ENCODE measurements at regions of chr1 and their contacts with region 1.

Region 1: GRCh38 chr1:247390116-247390791 is 25.7 kb upstream of the NLRP3 start:
- DNase-seq: peak; percentile 42 to 78
- ATAC-seq: peak; percentile 81 to 94 (median 92)
- H3K4me3 ChIP-seq: peak overlapping the region in 6 of 10 donors; percentile 3 to 36 (median 28)
- H3K27ac ChIP-seq: peak overlapping the region in 1 of 10 donors; percentile 71
- H3K4me1 ChIP-seq: peaks cover 0 to 24% (median 0%) of the 10 kb centered on the region in 9 donors
- H3K27me3 ChIP-seq: peaks cover 0 to 13% (median 0%) of the 10 kb centered on the region in 7 donors
- CTCF ChIP-seq: peak; percentile 74 to 93 (median 86)

Region 2: DNA sequence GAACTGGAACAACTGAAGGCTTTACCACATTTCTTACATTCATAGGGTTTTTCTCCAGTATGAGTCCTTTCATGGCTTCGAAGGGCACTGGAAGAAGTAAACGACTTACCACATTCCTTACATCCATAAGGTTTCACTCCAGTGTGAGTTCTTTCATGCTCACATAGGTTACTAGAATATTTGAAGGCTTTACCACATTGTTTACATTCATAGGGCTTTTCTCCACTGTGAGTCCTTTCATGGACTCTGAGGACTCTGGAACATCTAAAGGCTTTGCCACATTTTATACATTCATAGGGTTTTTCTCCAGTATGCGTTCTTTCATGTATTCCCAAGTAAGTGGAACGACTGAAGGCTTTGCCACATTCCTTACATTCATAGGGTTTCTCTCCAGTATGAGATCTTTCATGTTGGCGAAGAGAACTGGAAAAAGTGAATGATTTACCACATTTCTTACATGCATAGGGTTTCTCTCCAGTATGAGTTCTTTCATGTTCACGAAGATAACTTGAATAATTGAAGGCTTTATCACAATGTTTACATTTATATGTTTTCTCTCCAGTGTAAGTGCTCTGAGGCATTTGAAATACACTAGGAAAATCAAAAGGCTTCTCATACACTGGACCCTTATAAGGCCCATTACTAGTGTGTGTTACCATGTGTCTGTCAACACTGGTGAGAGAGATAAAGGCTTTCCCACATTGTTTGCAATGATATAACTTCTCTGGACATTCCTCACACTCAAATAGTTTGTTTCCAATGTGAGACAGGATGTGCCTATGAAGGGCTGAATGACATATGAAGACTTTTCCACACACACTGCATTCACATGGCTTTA is 352.6 kb before region 1 on chr1:
- intact Hi-C with region 1: no loop called
- DNase-seq: no peak
- ATAC-seq: no peak
- H3K4me3 ChIP-seq: no peak overlapping the region
- H3K27ac ChIP-seq: no peak overlapping the region
- H3K4me1 ChIP-seq: no peaks in the 10 kb centered on the region
- H3K27me3 ChIP-seq: no peaks in the 10 kb centered on the region
- CTCF ChIP-seq: no peak

Region 3: DNA sequence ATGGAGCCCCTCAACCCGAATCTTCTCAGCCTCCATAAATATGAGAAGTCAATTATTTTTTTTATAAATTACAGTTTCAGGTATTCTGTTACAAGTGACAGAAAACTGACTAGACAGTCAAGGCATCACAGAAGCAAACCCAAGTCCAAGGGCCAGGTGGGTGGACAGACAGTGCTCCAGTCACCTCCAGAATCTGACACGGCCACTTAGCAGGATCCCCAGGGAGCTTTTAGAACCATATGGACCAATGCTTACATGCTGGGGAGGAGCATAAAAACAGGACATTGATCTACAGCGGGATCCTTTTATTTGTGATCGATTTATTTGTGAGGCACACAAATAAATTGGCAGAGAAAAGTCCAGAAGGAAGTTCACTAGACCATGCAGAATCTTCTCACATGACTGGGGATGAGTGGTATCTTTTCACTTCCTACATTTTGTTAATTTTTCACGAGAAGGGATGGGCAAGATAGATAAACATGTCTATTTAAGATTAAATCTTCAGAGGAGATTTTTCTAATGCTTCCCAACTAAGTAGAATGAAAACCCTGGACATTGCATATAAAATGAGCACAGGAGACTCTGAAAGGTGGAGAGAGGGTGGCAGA is 73.6 kb before region 1 on chr1:
- intact Hi-C with region 1: no loop called
- DNase-seq: no peak
- ATAC-seq: no peak
- H3K4me3 ChIP-seq: no peak overlapping the region
- H3K27ac ChIP-seq: no peak overlapping the region
- H3K4me1 ChIP-seq: no peaks in the 10 kb centered on the region
- H3K27me3 ChIP-seq: no peaks in the 10 kb centered on the region
- CTCF ChIP-seq: no peak

Region 4: DNA sequence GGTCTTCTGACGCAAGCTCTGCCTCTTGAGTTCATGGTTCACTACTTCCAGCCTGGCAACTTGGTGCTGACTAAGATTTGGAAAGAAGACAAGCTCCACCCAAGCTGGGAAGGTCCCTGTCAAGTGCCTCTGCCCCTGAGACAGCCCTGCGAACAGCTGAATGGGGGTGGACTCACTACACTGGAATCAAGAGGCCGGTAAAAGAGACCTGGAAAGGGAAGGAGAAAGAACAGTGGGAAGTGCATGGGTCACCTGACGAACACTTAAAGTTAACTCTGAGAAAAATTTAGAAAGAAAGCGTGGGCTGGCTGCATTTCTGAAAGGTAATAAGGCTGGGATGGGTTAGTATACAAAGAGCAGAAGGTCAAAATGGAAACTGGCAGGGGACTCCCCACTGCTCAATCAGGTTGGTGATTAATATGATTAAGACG is 32.5 kb before region 1 on chr1:
- intact Hi-C with region 1: no loop called
- DNase-seq: no peak
- ATAC-seq: peak in 6 of 8 donors; percentile 16 to 71 (median 37)
- H3K4me3 ChIP-seq: no peak overlapping the region
- H3K27ac ChIP-seq: peak overlapping the region in 5 of 10 donors; percentile 35 to 75 (median 48)
- H3K4me1 ChIP-seq: peaks cover 0 to 60% (median 13%) of the 10 kb centered on the region in 9 donors
- H3K27me3 ChIP-seq: peaks cover 0 to 10% (median 0%) of the 10 kb centered on the region in 7 donors
- CTCF ChIP-seq: no peak

Region 5: DNA sequence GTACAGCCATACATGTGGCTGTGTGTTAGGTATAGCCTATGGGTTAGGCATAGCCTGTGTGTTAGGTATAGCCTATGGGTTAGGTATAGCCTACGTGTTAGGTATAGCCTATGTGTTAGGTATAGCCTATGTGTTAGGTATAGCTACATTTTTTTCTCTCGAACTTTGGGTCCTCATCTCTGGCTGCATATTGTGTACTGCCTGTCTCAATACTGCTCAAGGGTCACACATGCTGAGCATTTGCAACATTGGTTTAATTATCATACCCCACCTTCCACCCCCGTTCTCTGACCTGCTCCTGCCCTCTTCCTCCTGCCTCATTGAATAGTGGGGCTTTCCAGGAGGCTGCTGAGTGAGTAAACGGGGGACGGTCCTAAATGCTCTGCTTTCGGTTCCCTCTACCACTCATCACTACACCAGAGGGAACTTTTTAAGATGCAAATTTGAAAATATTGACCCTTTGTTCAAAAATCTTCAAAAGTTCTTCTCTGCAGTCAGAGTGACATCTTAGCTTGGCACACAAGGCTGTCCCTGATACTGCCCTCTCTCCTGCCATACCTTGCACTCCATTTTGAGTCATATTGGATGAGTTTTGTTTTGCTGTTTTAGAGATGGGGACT is 49.9 kb after region 1 on chr1:
- intact Hi-C with region 1: loop called in 1 of 10 experiments (anchors 5 kb)
- DNase-seq: no peak
- ATAC-seq: no peak
- H3K4me3 ChIP-seq: no peak overlapping the region
- H3K27ac ChIP-seq: peak overlapping the region in 1 of 10 donors; percentile 26
- H3K4me1 ChIP-seq: peaks cover 0 to 38% (median 0%) of the 10 kb centered on the region in 9 donors
- H3K27me3 ChIP-seq: peaks cover 0 to 13% (median 0%) of the 10 kb centered on the region in 7 donors
- CTCF ChIP-seq: no peak

Region 6: GRCh38 chr1:247487057-247487456 is 96.8 kb after region 1 on chr1:
- intact Hi-C with region 1: loop called (anchors 2 to 10 kb)
- DNase-seq: no peak
- ATAC-seq: peak in 7 of 8 donors; percentile 30 to 79 (median 63)
- H3K4me3 ChIP-seq: no peak overlapping the region
- H3K27ac ChIP-seq: no peak overlapping the region
- H3K4me1 ChIP-seq: no peaks in the 10 kb centered on the region
- H3K27me3 ChIP-seq: peaks cover 0 to 34% (median 7%) of the 10 kb centered on the region in 7 donors
- CTCF ChIP-seq: peak; percentile 11 to 66 (median 50)

Measured in heart right ventricle (tissue), 16 donors.